ENCODE measurements at regions of chr9 and their contacts with region 1.

Region 1: DNA sequence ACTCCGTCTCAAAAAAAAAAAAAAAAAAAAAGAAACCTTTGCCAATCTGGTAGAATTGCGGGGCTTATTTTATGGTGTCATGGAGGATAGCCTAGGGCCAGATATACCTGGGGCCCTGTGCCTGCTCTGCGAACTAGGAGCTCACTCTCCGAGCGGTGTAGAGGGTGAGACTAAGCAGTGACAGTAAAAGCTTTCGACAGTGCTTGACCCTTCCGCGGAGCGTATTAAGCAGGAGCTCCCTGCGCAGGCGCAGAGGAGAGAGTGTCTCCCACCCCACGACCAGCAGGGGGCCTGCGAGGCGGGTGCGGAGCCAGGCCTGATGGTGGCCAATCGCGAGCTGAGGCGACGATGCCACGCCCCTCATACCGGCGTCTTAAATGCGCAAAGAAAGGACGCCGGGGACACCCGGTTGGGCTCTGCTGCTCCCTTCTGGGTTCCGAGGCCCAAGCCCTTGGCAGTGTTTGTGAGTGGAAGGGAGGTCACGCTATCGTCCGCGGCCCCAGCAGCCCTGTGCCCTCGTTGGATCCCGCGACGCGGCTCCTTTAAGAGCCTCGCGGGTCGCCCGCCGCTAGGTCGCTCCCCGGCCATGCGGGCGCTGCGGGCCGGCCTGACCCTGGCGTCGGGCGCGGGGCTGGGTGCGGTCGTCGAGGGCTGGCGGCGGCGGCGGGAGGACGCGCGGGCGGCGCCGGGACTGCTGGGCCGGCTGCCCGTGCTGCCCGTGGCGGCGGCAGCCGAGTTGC is at the start of gene ENDOG:
- DNase-seq: peak; percentile 98
- H3K4me3 ChIP-seq: peak within 1 kb of the TSS; percentile 71
- H3K27ac ChIP-seq: no peak within 1 kb of the TSS
- H3K4me1 ChIP-seq: peaks cover 23% of the 10 kb centered on the region
- CTCF ChIP-seq: peak; percentile 87
- total RNA-seq, gene ENDOG: 31.9 and 35.2 TPM in 2 replicates

Region 2: DNA sequence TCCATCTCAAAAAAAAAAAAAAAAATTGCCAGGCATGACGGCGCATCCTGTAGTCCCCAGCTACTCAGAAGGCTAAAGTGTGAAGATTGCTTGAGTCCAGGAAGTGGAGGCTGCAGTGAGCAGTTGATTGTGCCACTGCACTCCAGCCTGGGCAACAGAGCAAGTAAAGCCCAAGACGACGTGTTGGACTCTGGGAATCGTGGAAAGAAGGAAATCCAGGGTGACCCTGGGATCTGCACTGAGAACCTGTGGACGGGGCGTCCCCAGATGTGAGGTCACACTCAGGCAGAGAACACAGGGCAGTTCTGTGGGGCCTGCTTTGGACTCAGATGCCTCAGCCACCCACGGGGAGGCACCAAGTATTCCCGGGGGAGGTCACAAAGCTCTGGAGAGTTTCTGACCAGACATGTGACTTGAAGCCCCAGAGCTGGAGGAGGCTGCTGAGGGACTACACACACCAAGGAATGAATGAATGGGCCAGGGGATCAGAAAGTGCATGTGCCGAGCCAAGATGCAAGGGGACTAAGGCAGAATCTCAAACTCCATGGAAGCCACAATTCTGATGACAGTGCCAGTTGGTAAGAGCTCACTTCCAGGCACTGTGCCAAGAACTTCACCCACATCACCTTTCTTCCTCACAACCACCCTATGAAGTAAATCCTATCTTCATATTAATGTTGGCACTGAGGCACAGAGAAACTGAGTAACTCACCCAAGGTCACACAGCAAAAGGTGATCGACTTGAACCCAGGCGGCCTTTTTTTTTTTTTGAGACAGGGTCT is 174.6 kb before region 1 on chr9:
- CTCF ChIA-PET with region 1: no interaction called
- POLR2A ChIA-PET with region 1: interaction called, 4 read pairs
- intact Hi-C with region 1: loop called (anchors 5 kb)
- DNase-seq: peak; percentile 89
- H3K4me3 ChIP-seq: peak overlapping the region; percentile 42
- H3K27ac ChIP-seq: peak overlapping the region; percentile 87
- H3K4me1 ChIP-seq: peaks cover 27% of the 10 kb centered on the region
- CTCF ChIP-seq: no peak

Region 3: GRCh38 chr9:128677794-128678193 is 140.5 kb before region 1 on chr9:
- CTCF ChIA-PET with region 1: no interaction called
- POLR2A ChIA-PET with region 1: no interaction called
- intact Hi-C with region 1: no loop called
- DNase-seq: no peak
- H3K4me3 ChIP-seq: no peak overlapping the region
- H3K27ac ChIP-seq: no peak overlapping the region
- H3K4me1 ChIP-seq: peaks cover 27% of the 10 kb centered on the region
- CTCF ChIP-seq: no peak

Region 4: DNA sequence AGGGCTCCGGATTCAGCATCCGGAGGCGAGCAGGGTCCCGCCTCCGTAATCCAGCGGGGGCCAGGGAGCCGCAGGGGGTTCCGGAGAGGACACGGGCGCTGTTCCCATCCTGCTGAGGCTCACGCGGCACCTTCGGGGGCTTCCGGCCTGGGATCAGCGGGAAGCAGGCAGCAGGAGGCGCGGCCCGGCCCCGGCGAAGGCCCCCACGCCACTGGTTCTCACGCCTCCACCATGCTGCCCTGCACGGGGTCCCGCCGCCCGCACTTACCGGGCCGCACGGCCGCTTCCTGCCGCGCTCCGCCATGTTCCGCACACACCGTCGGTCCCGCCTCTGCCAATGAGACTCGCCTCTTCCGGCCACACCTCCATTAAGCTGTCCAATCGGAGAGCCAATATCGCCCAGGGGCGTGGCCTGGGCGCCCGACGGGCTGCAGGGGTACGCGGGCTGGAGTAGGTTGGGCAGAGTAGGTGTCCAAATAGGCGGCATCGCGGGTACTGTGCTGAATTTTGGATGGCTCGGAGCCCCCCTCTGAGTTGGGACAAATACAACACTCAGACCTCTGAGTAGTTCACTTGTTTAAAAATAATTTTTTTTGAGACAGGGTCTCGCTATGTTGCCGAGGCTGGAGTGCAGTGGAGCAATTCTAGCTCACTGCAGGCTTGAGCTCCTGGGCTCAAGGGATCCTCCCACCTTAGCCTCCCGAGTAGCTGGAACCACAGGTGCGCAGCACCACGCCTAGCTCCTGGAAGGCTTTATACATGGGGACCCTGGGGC is 11.4 kb after region 1 on chr9 and contains the start of gene SPOUT1:
- CTCF ChIA-PET with region 1: interaction called, 9 read pairs
- POLR2A ChIA-PET with region 1: interaction called, 24 read pairs
- intact Hi-C with region 1: no loop called
- DNase-seq: peak; percentile 97
- H3K4me3 ChIP-seq: peak within 1 kb of the TSS; percentile 80
- H3K27ac ChIP-seq: peak within 1 kb of the TSS; percentile 51
- H3K4me1 ChIP-seq: peaks cover 15% of the 10 kb centered on the region
- CTCF ChIP-seq: no peak
- total RNA-seq, gene SPOUT1: 38.9 and 51.2 TPM in 2 replicates

Region 5: DNA sequence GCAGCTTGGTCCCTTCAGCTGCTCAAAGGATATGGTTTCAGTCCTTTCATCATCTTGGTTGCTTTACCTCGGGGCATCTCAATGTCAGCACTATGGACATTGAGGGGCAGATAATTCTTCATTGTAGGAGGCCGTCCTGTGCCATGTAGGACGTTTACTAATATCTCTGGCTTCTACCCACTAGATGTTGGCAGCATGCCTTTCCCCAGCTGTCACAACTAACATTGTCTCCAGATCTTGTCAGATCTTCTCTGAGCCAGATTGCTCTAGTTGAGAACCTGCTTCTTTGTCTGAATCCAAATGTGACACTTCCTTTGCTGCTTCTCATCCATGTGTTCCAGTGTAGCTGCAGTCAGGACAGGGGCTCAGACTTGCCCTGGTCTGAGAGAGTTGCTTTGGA is 303.2 kb after region 1 on chr9:
- CTCF ChIA-PET with region 1: no interaction called
- POLR2A ChIA-PET with region 1: no interaction called
- intact Hi-C with region 1: no loop called
- DNase-seq: no peak
- H3K4me3 ChIP-seq: no peak overlapping the region
- H3K27ac ChIP-seq: no peak overlapping the region
- H3K4me1 ChIP-seq: no peaks in the 10 kb centered on the region
- CTCF ChIP-seq: no peak